Activated CD4-positive, alpha-beta memory T cell treated with anti-CD3 and anti-CD28 coated beads for 36 hours (primary cell): ENCODE measurements at regions of chr19 and their contacts with region 1.

Region 1: GRCh38 chr19:42268704-42269477 is at the start of gene CIC:
- DNase-seq: peak; percentile 99
- H3K4me3 Mint-ChIP-seq: no peak within 1 kb of the TSS
- H3K27ac Mint-ChIP-seq: no peak within 1 kb of the TSS
- H3K4me1 Mint-ChIP-seq: peaks cover 23% of the 10 kb centered on the region
- H3K27me3 Mint-ChIP-seq: no peaks in the 10 kb centered on the region
- total RNA-seq, gene CIC: 56.9 to 64.2 TPM

Region 2: GRCh38 chr19:41883821-41884733 is 384.8 kb before region 1 on chr19:
- CTCF ChIA-PET with region 1: no interaction called
- POLR2A ChIA-PET with region 1: no interaction called
- intact Hi-C with region 1: loop called (anchors 5 kb)
- DNase-seq: peak; percentile 95
- H3K4me3 Mint-ChIP-seq: peak overlapping the region; percentile 95
- H3K27ac Mint-ChIP-seq: peak overlapping the region; percentile 97
- H3K4me1 Mint-ChIP-seq: peaks cover 59% of the 10 kb centered on the region
- H3K27me3 Mint-ChIP-seq: no peaks in the 10 kb centered on the region

Region 3: GRCh38 chr19:42075616-42076379 is 193.1 kb before region 1 on chr19 and contains the start of gene ZNF574:
- CTCF ChIA-PET with region 1: no interaction called
- POLR2A ChIA-PET with region 1: no interaction called
- intact Hi-C with region 1: loop called (anchors 1 kb)
- DNase-seq: peak; percentile 99
- H3K4me3 Mint-ChIP-seq: peak within 1 kb of the TSS; percentile 99
- H3K27ac Mint-ChIP-seq: peak within 1 kb of the TSS; percentile 99
- H3K4me1 Mint-ChIP-seq: peaks cover 35% of the 10 kb centered on the region
- H3K27me3 Mint-ChIP-seq: no peaks in the 10 kb centered on the region
- total RNA-seq, gene ZNF574: 12.2 to 13.2 TPM

Region 4: DNA sequence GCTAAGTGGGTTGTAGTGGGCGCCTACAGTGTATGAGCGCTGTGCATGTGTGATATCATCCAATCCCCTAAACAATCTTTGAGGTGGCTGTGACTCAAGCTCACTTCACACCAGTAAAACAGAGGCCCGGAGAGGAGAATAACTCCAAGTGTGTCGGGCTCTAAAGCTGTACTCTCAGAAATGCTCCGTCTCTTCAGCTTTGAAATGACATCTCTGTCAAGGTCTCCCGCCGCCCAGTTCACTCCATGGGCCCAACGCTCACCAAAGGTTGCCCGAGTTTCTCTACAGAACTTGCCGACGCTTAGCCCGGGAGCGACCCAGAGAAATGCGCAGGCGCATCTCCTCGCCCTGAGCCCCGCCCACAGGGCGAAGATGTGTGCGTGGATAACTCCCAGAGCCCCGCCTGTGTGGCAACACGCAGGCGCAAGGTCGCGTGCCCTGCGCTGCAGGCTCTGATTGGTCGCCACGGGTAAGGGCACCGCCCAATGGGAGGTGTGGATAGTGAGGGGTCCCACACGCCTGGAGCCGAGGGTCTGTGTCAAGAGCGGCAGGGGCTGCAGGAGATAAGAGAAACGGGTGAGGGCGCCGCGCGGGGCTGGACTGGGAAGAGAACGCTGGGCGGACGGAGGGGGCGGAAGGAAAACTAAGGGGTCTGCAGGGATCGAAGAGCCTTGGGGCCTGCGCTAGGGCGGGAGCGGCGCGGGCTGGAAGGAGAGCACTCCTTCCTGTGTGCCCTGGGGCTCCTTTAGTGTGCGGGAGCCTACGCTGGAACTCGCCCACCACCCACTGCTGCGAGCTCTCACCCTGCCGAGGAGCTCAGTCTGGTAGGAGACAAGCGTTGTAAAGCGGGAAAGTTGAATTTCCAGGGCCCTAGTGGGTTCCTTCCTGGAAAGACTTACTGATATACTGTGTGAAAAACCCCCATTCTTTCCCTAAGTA is 48.8 kb before region 1 on chr19 and contains the start of gene ZNF526:
- CTCF ChIA-PET with region 1: no interaction called
- POLR2A ChIA-PET with region 1: interaction called, 3 read pairs
- intact Hi-C with region 1: loop called (anchors 1 kb)
- DNase-seq: peak; percentile 98
- H3K4me3 Mint-ChIP-seq: peak within 1 kb of the TSS; percentile 92
- H3K27ac Mint-ChIP-seq: peak within 1 kb of the TSS; percentile 99
- H3K4me1 Mint-ChIP-seq: peaks cover 43% of the 10 kb centered on the region
- H3K27me3 Mint-ChIP-seq: peaks cover 1% of the 10 kb centered on the region
- total RNA-seq, gene ZNF526: 12.3 to 14.9 TPM

Region 5: GRCh38 chr19:42254989-42255765 is 13.7 kb before region 1 on chr19 and contains the start of gene ERF:
- CTCF ChIA-PET with region 1: no interaction called
- POLR2A ChIA-PET with region 1: interaction called, 4 read pairs
- intact Hi-C with region 1: loop called (anchors 1 kb)
- DNase-seq: peak; percentile 95
- H3K4me3 Mint-ChIP-seq: peak within 1 kb of the TSS; percentile 80
- H3K27ac Mint-ChIP-seq: peak within 1 kb of the TSS; percentile 79
- H3K4me1 Mint-ChIP-seq: peaks cover 30% of the 10 kb centered on the region
- H3K27me3 Mint-ChIP-seq: no peaks in the 10 kb centered on the region
- total RNA-seq, gene ERF: 43.1 to 56.5 TPM